Activated CD4-positive, alpha-beta T cell treated with anti-CD3 and anti-CD28 coated beads for 36 hours (primary cell): ENCODE measurements at regions of chr10 and their contacts with region 1.

Region 1: GRCh38 chr10:12656518-12657142 is 307.3 kb downstream of the CAMK1D start:
- DNase-seq: no peak
- ATAC-seq: peak; percentile 75
- H3K4me3 Mint-ChIP-seq: no peak overlapping the region
- H3K27ac Mint-ChIP-seq: no peak overlapping the region
- H3K4me1 Mint-ChIP-seq: peaks cover 27% of the 10 kb centered on the region
- H3K27me3 Mint-ChIP-seq: no peaks in the 10 kb centered on the region

Region 2: DNA sequence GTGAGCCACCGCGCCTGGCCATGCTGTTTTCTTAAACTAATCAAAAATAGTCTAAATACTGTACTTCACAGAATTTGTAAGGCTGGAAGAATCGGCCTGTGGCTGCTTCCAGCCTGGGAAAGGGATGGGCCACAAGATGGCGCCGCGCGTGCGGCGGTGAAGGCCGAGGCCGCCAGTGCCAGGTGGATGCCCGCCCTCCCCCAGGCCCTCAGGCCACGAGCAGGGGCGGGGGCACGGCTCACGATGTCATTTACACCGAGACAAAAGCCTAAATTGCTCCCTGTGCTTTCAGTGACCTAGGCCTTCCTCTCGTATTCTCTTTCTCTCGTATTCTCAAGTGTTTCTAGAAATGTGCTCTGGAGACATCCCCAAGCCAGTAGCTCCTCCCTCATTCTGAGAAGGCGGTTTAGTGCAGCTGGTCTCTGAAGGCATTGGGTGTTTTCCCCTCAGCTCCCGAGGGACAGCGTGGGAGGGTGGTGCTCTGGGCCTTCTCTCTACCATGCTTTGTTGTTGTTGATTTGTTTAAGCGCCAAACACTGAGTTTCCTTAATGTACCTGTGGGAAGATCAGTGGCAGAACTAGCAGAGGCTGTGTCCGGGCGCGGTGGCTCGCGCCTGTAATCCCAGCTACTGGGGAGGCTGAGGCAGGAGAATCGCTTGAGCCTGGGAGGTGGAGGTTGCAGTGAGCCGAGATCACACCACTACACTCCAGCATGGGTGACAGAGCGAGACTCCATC is 392.3 kb before region 1 on chr10:
- CTCF ChIA-PET with region 1: interaction called, 61 read pairs
- POLR2A ChIA-PET with region 1: interaction called, 3 read pairs
- intact Hi-C with region 1: loop called (anchors 1 kb)
- DNase-seq: peak; percentile 88
- ATAC-seq: peak; percentile 93
- H3K4me3 Mint-ChIP-seq: peak overlapping the region; percentile 42
- H3K27ac Mint-ChIP-seq: peak overlapping the region; percentile 83
- H3K4me1 Mint-ChIP-seq: peaks cover 17% of the 10 kb centered on the region
- H3K27me3 Mint-ChIP-seq: no peaks in the 10 kb centered on the region

Region 3: GRCh38 chr10:12526311-12526710 is 130.3 kb before region 1 on chr10:
- CTCF ChIA-PET with region 1: no interaction called
- POLR2A ChIA-PET with region 1: no interaction called
- intact Hi-C with region 1: loop called in 1 of 2 experiments (anchors 1 kb)
- DNase-seq: no peak
- ATAC-seq: no peak
- H3K4me3 Mint-ChIP-seq: no peak overlapping the region
- H3K27ac Mint-ChIP-seq: no peak overlapping the region
- H3K4me1 Mint-ChIP-seq: peaks cover 16% of the 10 kb centered on the region
- H3K27me3 Mint-ChIP-seq: no peaks in the 10 kb centered on the region

Region 4: GRCh38 chr10:12638103-12638502 is 18.5 kb before region 1 on chr10:
- CTCF ChIA-PET with region 1: interaction called, 17 read pairs
- POLR2A ChIA-PET with region 1: no interaction called
- intact Hi-C with region 1: loop called in 1 of 2 experiments (anchors 1 kb)
- DNase-seq: peak; percentile 74
- ATAC-seq: peak; percentile 49
- H3K4me3 Mint-ChIP-seq: no peak overlapping the region
- H3K27ac Mint-ChIP-seq: no peak overlapping the region
- H3K4me1 Mint-ChIP-seq: peaks cover 56% of the 10 kb centered on the region
- H3K27me3 Mint-ChIP-seq: no peaks in the 10 kb centered on the region